A549 (cell line): ENCODE measurements at regions of chr15 and their contacts with region 1.

Region 1: GRCh38 chr15:68210821-68211655 is 5.9 kb upstream of the CALML4 start:
- DNase-seq: peak; percentile 42 to 72
- ATAC-seq: peak; percentile 77 to 89
- H3K4me3 ChIP-seq: no peak overlapping the region
- H3K27ac ChIP-seq: peak overlapping the region in 1 of 2 experiments; percentile 40; a peak in 1 of 6 replicates
- H3K4me1 ChIP-seq: no peaks in the 10 kb centered on the region
- CTCF ChIP-seq: peak; percentile 74
- EP300 ChIP-seq: no peak
- POLR2A ChIP-seq: no peak
- RAD21 ChIP-seq: peak; percentile 63 to 73

Region 2: GRCh38 chr15:68192804-68193486 is 18.1 kb before region 1 on chr15:
- CTCF ChIA-PET with region 1: interaction called, 42 read pairs
- POLR2A ChIA-PET with region 1: no interaction called
- DNase-seq: no peak
- ATAC-seq: peak in 1 of 2 experiments; percentile 9; a peak in 1 of 6 replicates
- H3K4me3 ChIP-seq: no peak overlapping the region
- H3K27ac ChIP-seq: no peak overlapping the region
- H3K4me1 ChIP-seq: no peaks in the 10 kb centered on the region
- CTCF ChIP-seq: no peak
- EP300 ChIP-seq: no peak
- POLR2A ChIP-seq: no peak
- RAD21 ChIP-seq: no peak

Region 3: DNA sequence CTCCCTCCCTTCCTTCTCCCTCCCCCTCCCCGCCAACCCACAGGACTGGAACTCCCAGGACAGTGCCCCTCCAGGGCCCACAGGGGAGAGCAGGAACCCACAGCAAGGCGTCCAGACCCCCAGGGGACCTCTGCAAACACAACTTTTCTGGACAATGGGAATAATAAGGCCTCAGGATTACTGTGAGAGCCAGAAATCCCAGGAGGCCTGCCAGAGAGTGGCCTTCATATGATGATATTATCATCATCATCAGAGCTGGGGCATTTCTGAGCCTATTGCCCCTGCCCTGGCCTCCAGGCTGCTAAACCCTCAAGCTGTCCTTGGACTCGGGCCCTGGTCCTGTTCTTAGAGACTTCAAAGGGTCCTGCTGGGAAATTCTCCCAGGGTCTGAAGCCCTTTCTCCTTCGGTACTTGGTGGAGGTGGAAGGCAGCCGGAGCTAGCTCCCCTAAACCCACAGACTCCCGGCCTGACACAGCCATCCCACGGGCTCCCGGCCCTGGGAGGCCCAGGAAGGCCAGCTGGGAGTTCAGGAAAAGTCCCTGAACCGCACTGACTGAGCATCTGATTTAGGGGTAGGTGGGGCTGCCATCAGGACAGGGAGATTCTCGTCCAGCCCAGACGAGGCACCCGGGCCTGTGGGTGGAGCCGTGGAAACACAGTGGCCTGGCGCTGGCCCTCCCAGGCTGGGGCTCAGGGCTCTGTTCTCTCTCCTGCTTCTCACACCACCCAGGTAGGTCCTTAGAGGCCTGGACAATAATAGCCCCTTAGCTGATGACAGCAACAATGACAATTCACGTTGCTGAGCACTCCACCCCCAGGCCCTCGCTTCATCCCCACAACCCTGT is 10.8 kb before region 1 on chr15:
- CTCF ChIA-PET with region 1: interaction called, 42 read pairs
- POLR2A ChIA-PET with region 1: no interaction called
- DNase-seq: no peak
- ATAC-seq: peak in 1 of 2 experiments; percentile 3; a peak in 2 of 6 replicates
- H3K4me3 ChIP-seq: no peak overlapping the region
- H3K27ac ChIP-seq: no peak overlapping the region
- H3K4me1 ChIP-seq: peaks cover 2% of the 10 kb centered on the region; the same call in 1 of the 3 replicates
- CTCF ChIP-seq: no peak
- EP300 ChIP-seq: no peak
- POLR2A ChIP-seq: no peak
- RAD21 ChIP-seq: no peak

Region 4: DNA sequence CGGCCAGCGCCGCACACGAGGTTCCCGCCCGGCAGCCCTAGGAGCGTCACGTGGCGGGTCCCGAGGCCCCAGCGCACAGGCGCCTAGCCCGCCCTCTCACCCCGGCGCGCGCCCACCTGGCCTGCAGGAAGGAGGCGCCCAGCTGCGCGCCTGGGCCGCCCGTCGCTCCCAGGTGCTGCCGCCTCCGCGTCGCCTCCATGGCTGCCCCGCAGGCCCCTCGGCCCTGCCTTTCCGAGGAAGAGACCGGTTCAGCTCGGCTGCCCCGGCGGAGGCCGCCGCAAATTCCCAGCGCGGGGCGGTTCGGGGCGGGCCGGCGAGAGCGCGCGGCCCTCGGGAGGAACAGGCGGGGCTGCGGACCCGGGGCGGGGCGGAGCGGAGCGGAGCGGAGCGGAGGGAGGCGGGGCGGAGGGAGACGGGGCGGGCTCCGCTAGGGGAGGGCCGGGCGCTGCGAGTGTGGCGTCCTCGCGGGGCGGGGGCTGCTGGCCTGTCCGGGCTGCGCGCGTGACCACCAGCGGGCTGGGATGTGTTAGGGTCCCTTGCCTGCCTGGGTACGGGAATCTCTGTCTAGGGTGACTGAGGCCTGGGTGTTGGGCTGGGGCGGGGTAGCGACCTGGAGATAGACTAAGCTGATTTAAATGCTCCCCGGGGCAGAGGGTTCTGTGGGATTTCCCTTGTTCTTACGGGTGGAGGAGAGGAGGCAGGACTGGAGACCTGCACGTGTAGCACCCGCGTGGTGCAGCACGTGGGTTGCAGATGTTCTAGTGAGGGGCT is 18.5 kb after region 1 on chr15 and contains the start of gene CLN6:
- CTCF ChIA-PET with region 1: interaction called, 15 read pairs
- POLR2A ChIA-PET with region 1: no interaction called
- DNase-seq: peak; percentile 83 to 88
- ATAC-seq: peak; percentile 91
- H3K4me3 ChIP-seq: peak within 1 kb of the TSS; percentile 67
- H3K27ac ChIP-seq: peak within 1 kb of the TSS; percentile 94 to 96
- H3K4me1 ChIP-seq: peaks cover 25% of the 10 kb centered on the region
- CTCF ChIP-seq: no peak
- EP300 ChIP-seq: no peak
- POLR2A ChIP-seq: peak; percentile 60
- RAD21 ChIP-seq: no peak
- polyA plus RNA-seq, gene CLN6: 47.5 and 58.0 TPM in 2 replicates

Region 5: DNA sequence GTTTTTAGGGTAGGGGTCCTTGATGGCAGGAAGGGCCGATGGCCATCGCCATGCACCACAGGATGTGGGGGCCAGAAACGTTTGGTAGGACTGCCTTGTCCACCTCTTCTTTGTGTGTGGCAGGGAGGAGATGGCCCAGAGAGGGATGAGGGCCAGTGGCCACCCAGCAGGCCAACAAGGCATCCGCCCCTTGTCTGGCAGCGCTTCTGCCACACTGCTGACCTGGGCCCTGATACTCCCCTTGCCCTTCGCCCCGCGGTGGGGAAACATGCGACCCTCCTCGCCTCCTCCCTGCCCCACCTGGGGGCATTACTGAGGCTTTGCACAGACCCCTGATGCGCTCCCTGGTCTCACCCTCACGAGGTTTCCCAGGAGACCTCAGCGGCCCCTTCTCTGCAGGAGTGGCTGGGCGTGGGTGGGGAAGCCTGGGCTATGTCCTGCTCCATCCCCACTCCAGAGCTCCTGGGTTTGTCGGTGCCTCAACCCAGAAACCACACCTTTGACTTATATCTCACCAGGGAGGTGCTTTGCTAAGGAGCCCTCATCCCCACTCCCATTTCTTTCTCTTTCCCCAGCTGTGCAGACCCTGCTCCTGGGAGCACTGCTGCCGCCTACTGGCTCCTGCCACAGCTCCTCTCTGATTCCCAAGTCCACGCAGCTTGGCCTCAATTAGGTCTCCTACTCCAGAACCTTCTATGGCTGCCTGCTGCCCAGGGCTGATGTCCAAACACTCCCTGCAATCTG is 105.2 kb after region 1 on chr15:
- CTCF ChIA-PET with region 1: no interaction called
- POLR2A ChIA-PET with region 1: no interaction called
- DNase-seq: peak in 1 of 2 experiments; percentile 33
- ATAC-seq: peak; percentile 39 to 75; a peak in 4 of 6 replicates
- H3K4me3 ChIP-seq: no peak overlapping the region
- H3K27ac ChIP-seq: peak overlapping the region in 1 of 2 experiments; percentile 25; a peak in 1 of 6 replicates
- H3K4me1 ChIP-seq: no peaks in the 10 kb centered on the region
- CTCF ChIP-seq: peak; percentile 55
- EP300 ChIP-seq: no peak
- POLR2A ChIP-seq: no peak
- RAD21 ChIP-seq: peak; percentile 45 to 51; a peak in 4 of 5 replicates